GM10248 (cell line): ENCODE measurements at regions of chr7 and their contacts with region 1.

Region 1: GRCh38 chr7:6139189-6139996 is 108.2 kb downstream of the ANKRD61 start:
- DNase-seq: no peak
- CTCF ChIP-seq: no peak

Region 2: GRCh38 chr7:6153646-6154541 is 14.5 kb after region 1 on chr7:
- CTCF ChIA-PET with region 1: interaction called, 13 read pairs
- POLR2A ChIA-PET with region 1: no interaction called
- DNase-seq: no peak
- CTCF ChIP-seq: no peak

Region 3: GRCh38 chr7:6178298-6179029 is 39.1 kb after region 1 on chr7:
- CTCF ChIA-PET with region 1: no interaction called
- POLR2A ChIA-PET with region 1: no interaction called
- DNase-seq: no peak
- CTCF ChIP-seq: no peak